IMR-90 (cell line): ENCODE measurements at regions of chr5 and their contacts with region 1.

Region 1: GRCh38 chr5:175729829-175730277 is 72.0 kb downstream of the HRH2 start:
- DNase-seq: peak; percentile 85
- ATAC-seq: peak; percentile 99
- H3K4me3 ChIP-seq: no peak overlapping the region
- H3K27ac ChIP-seq: no peak overlapping the region
- H3K4me1 ChIP-seq: no peaks in the 10 kb centered on the region
- H3K27me3 ChIP-seq: no peaks in the 10 kb centered on the region; the same call in 1 of the 2 replicates
- CTCF ChIP-seq: peak; percentile 99
- POLR2A ChIP-seq: peak; percentile 60
- RAD21 ChIP-seq: peak; percentile 100

Region 2: GRCh38 chr5:175638305-175638704 is 91.5 kb before region 1 on chr5:
- CTCF ChIA-PET with region 1: no interaction called
- POLR2A ChIA-PET with region 1: no interaction called
- dilution Hi-C with region 1: no loop called
- in situ Hi-C with region 1: no loop called
- intact Hi-C with region 1: no loop called
- DNase-seq: no peak
- ATAC-seq: no peak
- H3K4me3 ChIP-seq: no peak overlapping the region
- H3K27ac ChIP-seq: no peak overlapping the region
- H3K4me1 ChIP-seq: no peaks in the 10 kb centered on the region
- H3K27me3 ChIP-seq: no peaks in the 10 kb centered on the region
- CTCF ChIP-seq: no peak
- POLR2A ChIP-seq: no peak
- RAD21 ChIP-seq: no peak

Region 3: GRCh38 chr5:176337913-176338312 is 608.1 kb after region 1 on chr5:
- CTCF ChIA-PET with region 1: no interaction called
- POLR2A ChIA-PET with region 1: no interaction called
- dilution Hi-C with region 1: no loop called
- in situ Hi-C with region 1: loop called (anchors 25 kb)
- intact Hi-C with region 1: no loop called
- DNase-seq: no peak
- ATAC-seq: no peak
- H3K4me3 ChIP-seq: no peak overlapping the region
- H3K27ac ChIP-seq: no peak overlapping the region
- H3K4me1 ChIP-seq: no peaks in the 10 kb centered on the region
- H3K27me3 ChIP-seq: no peaks in the 10 kb centered on the region
- CTCF ChIP-seq: no peak
- POLR2A ChIP-seq: no peak
- RAD21 ChIP-seq: no peak

Region 4: GRCh38 chr5:176361437-176362232 is 631.8 kb after region 1 on chr5 and contains the start of gene KIAA1191:
- CTCF ChIA-PET with region 1: no interaction called
- POLR2A ChIA-PET with region 1: no interaction called
- dilution Hi-C with region 1: no loop called
- in situ Hi-C with region 1: no loop called
- intact Hi-C with region 1: loop called (anchors 5 kb)
- DNase-seq: peak; percentile 87
- ATAC-seq: peak; percentile 85
- H3K4me3 ChIP-seq: peak within 1 kb of the TSS; percentile 90
- H3K27ac ChIP-seq: peak within 1 kb of the TSS; percentile 91
- H3K4me1 ChIP-seq: peaks cover 7% of the 10 kb centered on the region
- H3K27me3 ChIP-seq: no peaks in the 10 kb centered on the region
- CTCF ChIP-seq: peak; percentile 37
- POLR2A ChIP-seq: peak; percentile 95
- RAD21 ChIP-seq: peak; percentile 36; the same call in 1 of the 2 replicates
- total RNA-seq, gene KIAA1191: 107 and 124 TPM in 2 replicates